ENCODE measurements at regions of chr7 and their contacts with region 1.

Region 1: GRCh38 chr7:16234493-16235146 is 186.7 kb downstream of the CRPPA start:
- DNase-seq: no peak
- H3K4me3 ChIP-seq: no peak overlapping the region
- H3K27ac ChIP-seq: no peak overlapping the region
- H3K4me1 ChIP-seq: no peaks in the 10 kb centered on the region
- H3K27me3 ChIP-seq: no peaks in the 10 kb centered on the region
- CTCF ChIP-seq: no peak
- POLR2A ChIP-seq: no peak

Region 2: GRCh38 chr7:16135658-16136057 is 99.0 kb before region 1 on chr7:
- CTCF ChIA-PET with region 1: no interaction called
- POLR2A ChIA-PET with region 1: no interaction called
- dilution Hi-C with region 1: no loop called
- intact Hi-C with region 1: loop called (anchors 5 kb)
- DNase-seq: no peak
- H3K4me3 ChIP-seq: no peak overlapping the region
- H3K27ac ChIP-seq: no peak overlapping the region
- H3K4me1 ChIP-seq: peaks cover 4% of the 10 kb centered on the region
- H3K27me3 ChIP-seq: no peaks in the 10 kb centered on the region
- CTCF ChIP-seq: no peak
- POLR2A ChIP-seq: no peak

Measured in endothelial cell of umbilical vein (primary cell).